Tibial artery (tissue), 4 donors: ENCODE measurements at regions of chr6 and their contacts with region 1.

Region 1: GRCh38 chr6:108541838-108542759 is 18.6 kb upstream of the FOXO3 start:
- DNase-seq: peak; percentile 64 to 75
- H3K4me3 ChIP-seq: no peak overlapping the region
- H3K27ac ChIP-seq: no peak overlapping the region
- H3K4me1 ChIP-seq: peaks cover 0 to 7% (median 3%) of the 10 kb centered on the region in 4 donors
- H3K27me3 ChIP-seq: peaks cover 0 to 3% of the 10 kb centered on the region in 2 donors
- CTCF ChIP-seq: peak; percentile 74 to 96

Region 2: GRCh38 chr6:107977283-107977682 is 564.8 kb before region 1 on chr6:
- intact Hi-C with region 1: no loop called
- DNase-seq: no peak
- H3K4me3 ChIP-seq: no peak overlapping the region
- H3K27ac ChIP-seq: no peak overlapping the region
- H3K4me1 ChIP-seq: no peaks in the 10 kb centered on the region
- H3K27me3 ChIP-seq: no peaks in the 10 kb centered on the region
- CTCF ChIP-seq: peak; percentile 16 to 32

Region 3: DNA sequence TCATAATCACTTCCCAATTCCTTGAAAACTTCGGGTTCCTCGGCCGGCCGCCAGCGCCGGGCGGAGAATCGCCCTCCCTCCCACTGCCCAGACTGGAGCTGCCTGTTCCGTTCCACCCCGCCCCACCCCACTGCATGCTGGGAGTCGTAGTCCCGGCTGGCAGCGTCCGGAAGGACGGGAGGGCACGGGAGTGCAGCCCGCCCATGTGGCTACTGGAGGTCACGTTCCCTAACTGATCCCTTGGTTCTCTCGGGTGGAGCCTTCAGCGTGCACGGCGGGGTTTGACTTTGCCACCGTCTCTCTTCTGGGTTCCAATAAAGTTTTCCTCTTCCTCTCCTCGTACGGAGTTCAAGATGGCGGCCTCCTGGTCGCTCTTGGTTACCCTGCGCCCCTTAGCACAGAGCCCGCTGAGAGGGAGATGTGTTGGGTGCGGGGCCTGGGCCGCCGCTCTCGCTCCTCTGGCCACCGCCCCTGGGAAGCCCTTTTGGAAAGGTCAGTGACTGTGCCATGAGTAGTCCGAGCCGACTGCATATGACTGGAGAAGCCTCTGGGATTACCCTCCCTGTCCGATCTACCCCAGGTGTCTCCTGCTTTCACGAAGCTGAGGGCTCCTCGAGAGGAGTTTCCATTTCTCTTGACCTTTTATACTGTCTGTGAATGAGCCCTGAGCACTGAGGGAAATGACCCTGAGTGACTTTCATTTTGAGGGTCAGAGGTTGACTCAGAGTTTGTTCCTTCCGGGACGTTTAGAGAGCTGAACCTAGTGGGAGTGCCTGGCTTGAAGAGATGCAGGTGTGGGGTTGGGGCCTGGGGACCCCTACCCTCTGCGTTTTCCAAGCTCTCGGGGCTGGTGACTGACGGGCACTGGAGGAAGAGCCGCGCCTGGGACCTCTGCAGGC is 247.1 kb before region 1 on chr6 and contains the start of gene AFG1L:
- intact Hi-C with region 1: no loop called
- DNase-seq: peak; percentile 94 to 95
- H3K4me3 ChIP-seq: peak within 1 kb of the TSS; percentile 64 to 73
- H3K27ac ChIP-seq: peak within 1 kb of the TSS; percentile 82
- H3K4me1 ChIP-seq: peaks cover 0 to 6% (median 5%) of the 10 kb centered on the region in 4 donors
- H3K27me3 ChIP-seq: no peaks in the 10 kb centered on the region
- CTCF ChIP-seq: no peak

Region 4: GRCh38 chr6:108348655-108349349 is 193.3 kb before region 1 on chr6:
- intact Hi-C with region 1: no loop called
- DNase-seq: no peak
- H3K4me3 ChIP-seq: no peak overlapping the region
- H3K27ac ChIP-seq: no peak overlapping the region
- H3K4me1 ChIP-seq: no peaks in the 10 kb centered on the region
- H3K27me3 ChIP-seq: no peaks in the 10 kb centered on the region
- CTCF ChIP-seq: no peak

Region 5: GRCh38 chr6:108464418-108465093 is 77.5 kb before region 1 on chr6:
- intact Hi-C with region 1: no loop called
- DNase-seq: no peak
- H3K4me3 ChIP-seq: no peak overlapping the region
- H3K27ac ChIP-seq: no peak overlapping the region
- H3K4me1 ChIP-seq: peaks cover 0 to 6% (median 0%) of the 10 kb centered on the region in 4 donors
- H3K27me3 ChIP-seq: no peaks in the 10 kb centered on the region
- CTCF ChIP-seq: no peak

Region 6: DNA sequence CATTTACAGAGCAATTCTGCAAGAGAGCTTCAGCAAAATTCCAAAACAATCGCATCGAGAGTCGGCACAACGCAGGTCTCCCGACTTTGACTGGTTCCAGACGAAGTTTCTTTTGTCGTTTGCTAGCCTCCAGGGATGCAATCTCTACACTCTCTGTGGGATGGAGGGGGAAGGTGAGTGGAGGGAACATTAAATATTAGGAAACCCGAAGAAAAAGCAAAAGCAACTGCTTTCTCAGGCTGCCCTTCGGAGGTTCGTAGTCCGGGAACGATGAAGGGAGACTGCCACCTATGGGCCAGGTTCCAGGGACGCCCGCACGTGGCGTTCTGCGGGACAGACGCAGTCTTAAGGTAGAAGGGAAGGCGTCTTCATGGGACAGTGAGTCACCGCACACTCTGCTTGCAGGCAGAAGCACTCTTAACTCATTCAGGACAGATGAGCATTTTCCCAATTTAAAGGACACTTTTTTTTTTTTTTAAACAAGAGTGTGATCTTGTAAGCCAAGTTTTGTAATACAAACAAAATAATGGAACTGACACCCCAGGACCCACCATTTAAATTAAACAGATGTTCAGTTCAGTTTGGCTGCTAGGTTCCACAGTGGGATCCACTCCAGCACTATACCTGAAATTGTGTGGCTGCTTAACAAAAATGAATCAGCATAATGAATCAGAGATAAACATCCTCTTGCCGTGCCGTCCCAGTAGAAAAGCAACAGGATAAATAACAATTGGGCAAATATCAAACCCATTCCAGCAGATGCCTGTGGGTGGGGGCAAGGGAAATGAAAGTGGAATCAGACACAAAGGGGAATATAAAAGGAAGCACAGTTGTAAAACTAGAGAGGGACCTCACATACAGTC is 240.3 kb after region 1 on chr6:
- intact Hi-C with region 1: loop called (anchors 5 kb)
- DNase-seq: peak; percentile 80 to 89
- H3K4me3 ChIP-seq: peak overlapping the region; percentile 49
- H3K27ac ChIP-seq: peak overlapping the region; percentile 5 to 57
- H3K4me1 ChIP-seq: peaks cover 0 to 15% (median 8%) of the 10 kb centered on the region in 4 donors
- H3K27me3 ChIP-seq: no peaks in the 10 kb centered on the region
- CTCF ChIP-seq: peak; percentile 75 to 79

Region 7: GRCh38 chr6:108835218-108835850 is 293.2 kb after region 1 on chr6:
- intact Hi-C with region 1: loop called (anchors 5 kb)
- DNase-seq: peak; percentile 90 to 92
- H3K4me3 ChIP-seq: no peak overlapping the region
- H3K27ac ChIP-seq: peak overlapping the region in 1 of 2 donors; percentile 13
- H3K4me1 ChIP-seq: peaks cover 0 to 18% (median 12%) of the 10 kb centered on the region in 4 donors
- H3K27me3 ChIP-seq: no peaks in the 10 kb centered on the region
- CTCF ChIP-seq: peak; percentile 89 to 97